CD8-positive, alpha-beta T cell (primary cell): ENCODE measurements at regions of chr10 and their contacts with region 1.

Region 1: GRCh38 chr10:24826019-24826418 is 102.3 kb upstream of the ARHGAP21 start:
- DNase-seq: peak in 2 of 9 experiments; percentile 9 to 13
- ATAC-seq: peak; percentile 49
- H3K4me3 ChIP-seq: peak overlapping the region in 1 of 2 experiments; percentile 5
- H3K4me3 Mint-ChIP-seq: peak overlapping the region; percentile 55
- H3K27ac ChIP-seq: no peak overlapping the region
- H3K27ac Mint-ChIP-seq: no peak overlapping the region
- H3K4me1 ChIP-seq: peaks cover 3% of the 10 kb centered on the region
- H3K4me1 Mint-ChIP-seq: peaks cover 33% of the 10 kb centered on the region
- H3K27me3 ChIP-seq: no peaks in the 10 kb centered on the region
- H3K27me3 Mint-ChIP-seq: no peaks in the 10 kb centered on the region
- CTCF ChIP-seq: no peak

Region 2: GRCh38 chr10:24574578-24575155 is 251.4 kb before region 1 on chr10:
- CTCF ChIA-PET with region 1: no interaction called
- POLR2A ChIA-PET with region 1: no interaction called
- intact Hi-C with region 1: no loop called
- DNase-seq: no peak
- ATAC-seq: no peak
- H3K4me3 ChIP-seq: no peak overlapping the region
- H3K4me3 Mint-ChIP-seq: no peak overlapping the region
- H3K27ac ChIP-seq: no peak overlapping the region
- H3K27ac Mint-ChIP-seq: no peak overlapping the region
- H3K4me1 ChIP-seq: no peaks in the 10 kb centered on the region
- H3K4me1 Mint-ChIP-seq: peaks cover 9% of the 10 kb centered on the region
- H3K27me3 ChIP-seq: no peaks in the 10 kb centered on the region
- H3K27me3 Mint-ChIP-seq: peaks cover 17% of the 10 kb centered on the region
- CTCF ChIP-seq: no peak

Region 3: GRCh38 chr10:24882047-24882698 is 56.2 kb after region 1 on chr10:
- CTCF ChIA-PET with region 1: interaction called, 3 read pairs
- POLR2A ChIA-PET with region 1: no interaction called
- intact Hi-C with region 1: loop called in 1 of 2 experiments (anchors 5 kb)
- DNase-seq: peak; percentile 29 to 86 (median 59)
- ATAC-seq: peak; percentile 84
- H3K4me3 ChIP-seq: peak overlapping the region; percentile 23 to 48
- H3K4me3 Mint-ChIP-seq: peak overlapping the region; percentile 86
- H3K27ac ChIP-seq: peak overlapping the region; percentile 44 to 46
- H3K27ac Mint-ChIP-seq: peak overlapping the region; percentile 96
- H3K4me1 ChIP-seq: peaks cover 59% of the 10 kb centered on the region
- H3K4me1 Mint-ChIP-seq: peaks cover 66% of the 10 kb centered on the region
- H3K27me3 ChIP-seq: no peaks in the 10 kb centered on the region
- H3K27me3 Mint-ChIP-seq: no peaks in the 10 kb centered on the region
- CTCF ChIP-seq: no peak

Region 4: GRCh38 chr10:24952707-24953645 is 127.0 kb after region 1 on chr10:
- CTCF ChIA-PET with region 1: interaction called, 3 read pairs
- POLR2A ChIA-PET with region 1: no interaction called
- intact Hi-C with region 1: loop called in 1 of 2 experiments (anchors 5 kb)
- DNase-seq: peak; percentile 25 to 84 (median 60)
- ATAC-seq: peak; percentile 82
- H3K4me3 ChIP-seq: peak overlapping the region; percentile 63 to 77
- H3K4me3 Mint-ChIP-seq: peak overlapping the region; percentile 82
- H3K27ac ChIP-seq: peak overlapping the region; percentile 31 to 35
- H3K27ac Mint-ChIP-seq: peak overlapping the region; percentile 84
- H3K4me1 ChIP-seq: peaks cover 15% of the 10 kb centered on the region
- H3K4me1 Mint-ChIP-seq: peaks cover 18% of the 10 kb centered on the region
- H3K27me3 ChIP-seq: no peaks in the 10 kb centered on the region
- H3K27me3 Mint-ChIP-seq: no peaks in the 10 kb centered on the region
- CTCF ChIP-seq: peak; percentile 63